Activated CD4-positive, alpha-beta T cell treated with anti-CD3 and anti-CD28 coated beads, Interleukin-2, amount 10 ng/mL, durations not matched to agents 24 days and 14 days (primary cell): ENCODE measurements at regions of chr10 and their contacts with region 1.

Region 1: DNA sequence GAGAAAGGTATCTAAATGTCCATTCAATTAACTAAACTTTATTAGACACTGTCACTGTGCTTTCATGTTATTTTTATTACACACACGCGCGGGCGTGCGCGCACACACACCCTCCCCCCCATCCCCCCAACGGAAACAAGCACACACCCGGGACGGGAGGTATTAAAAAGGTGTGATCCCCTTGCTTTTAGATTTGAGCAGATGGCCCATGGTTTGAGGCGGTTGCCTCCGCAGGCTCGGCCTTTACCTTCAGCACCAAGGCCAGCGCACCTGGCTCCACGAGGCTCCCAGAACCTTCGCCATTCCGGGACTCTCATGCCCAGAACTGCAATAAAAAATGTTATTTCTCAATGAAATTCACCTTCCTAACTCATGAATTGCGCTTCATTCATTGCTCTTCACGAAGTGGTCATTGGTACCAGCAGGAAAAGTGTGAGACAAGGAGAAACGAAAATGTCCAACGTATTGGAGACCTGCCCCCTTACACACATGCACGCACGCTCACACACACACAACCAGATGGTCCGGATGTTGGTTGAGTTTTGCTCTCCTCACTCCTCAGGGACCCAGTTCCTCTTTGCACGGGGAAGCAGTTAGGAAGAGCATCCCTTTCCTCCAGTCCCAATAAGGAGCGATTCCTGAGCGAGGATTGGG is 20.8 kb upstream of the PTF1A start:
- DNase-seq: no peak
- H3K4me3 Mint-ChIP-seq: no peak overlapping the region
- H3K27ac Mint-ChIP-seq: no peak overlapping the region
- H3K4me1 Mint-ChIP-seq: no peaks in the 10 kb centered on the region
- H3K27me3 Mint-ChIP-seq: peaks cover 64% of the 10 kb centered on the region

Region 2: DNA sequence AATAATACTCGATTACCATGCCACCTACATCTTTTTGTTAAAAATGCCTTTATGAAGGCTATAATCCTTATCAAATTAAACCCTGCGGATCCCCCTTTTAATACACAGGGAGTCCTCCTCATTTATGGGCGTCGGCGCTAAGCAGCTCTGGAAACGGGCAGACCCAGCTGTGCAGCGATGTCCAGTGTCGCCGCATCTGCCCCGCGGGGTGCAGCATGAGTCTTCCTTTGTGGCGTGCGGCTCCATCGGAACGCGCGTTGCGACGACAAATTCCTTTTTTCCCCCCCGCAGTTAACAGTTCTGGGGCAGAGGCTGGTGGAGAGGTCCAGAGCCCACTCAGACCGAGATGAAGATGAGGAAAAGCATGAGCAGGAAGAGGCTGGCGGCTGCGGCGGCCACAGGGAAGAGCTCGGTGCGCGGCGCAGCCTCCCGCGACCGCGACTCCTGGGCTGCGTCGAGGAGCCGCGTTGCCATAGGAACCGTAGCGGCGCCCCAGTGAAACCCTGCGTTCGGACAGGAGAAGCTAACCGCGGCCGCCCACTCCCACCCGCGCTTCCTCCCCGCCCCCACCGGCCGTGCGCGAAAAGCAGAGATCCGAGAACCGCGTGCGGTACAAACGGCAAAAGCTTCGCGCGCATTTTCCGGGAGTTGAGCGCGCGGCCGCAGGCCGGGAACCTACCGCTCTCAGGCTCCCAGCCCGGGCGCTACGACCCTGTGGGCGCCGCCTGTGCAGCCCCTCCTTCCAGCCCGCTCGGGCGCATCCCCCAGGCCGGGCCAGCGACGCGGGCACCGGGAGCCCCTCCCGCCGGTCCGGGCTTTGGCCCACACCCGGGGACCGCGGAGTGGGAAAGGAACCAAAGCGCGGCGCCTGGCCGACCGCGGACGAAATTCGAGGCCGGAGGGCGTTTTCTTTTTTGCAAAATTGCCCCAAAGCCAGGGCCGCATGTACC is 695.4 kb before region 1 on chr10:
- intact Hi-C with region 1: loop called (anchors 10 kb)
- DNase-seq: peak; percentile 79
- H3K4me3 Mint-ChIP-seq: peak overlapping the region; percentile 86
- H3K27ac Mint-ChIP-seq: peak overlapping the region; percentile 86
- H3K4me1 Mint-ChIP-seq: peaks cover 11% of the 10 kb centered on the region
- H3K27me3 Mint-ChIP-seq: peaks cover 57% of the 10 kb centered on the region

Region 3: DNA sequence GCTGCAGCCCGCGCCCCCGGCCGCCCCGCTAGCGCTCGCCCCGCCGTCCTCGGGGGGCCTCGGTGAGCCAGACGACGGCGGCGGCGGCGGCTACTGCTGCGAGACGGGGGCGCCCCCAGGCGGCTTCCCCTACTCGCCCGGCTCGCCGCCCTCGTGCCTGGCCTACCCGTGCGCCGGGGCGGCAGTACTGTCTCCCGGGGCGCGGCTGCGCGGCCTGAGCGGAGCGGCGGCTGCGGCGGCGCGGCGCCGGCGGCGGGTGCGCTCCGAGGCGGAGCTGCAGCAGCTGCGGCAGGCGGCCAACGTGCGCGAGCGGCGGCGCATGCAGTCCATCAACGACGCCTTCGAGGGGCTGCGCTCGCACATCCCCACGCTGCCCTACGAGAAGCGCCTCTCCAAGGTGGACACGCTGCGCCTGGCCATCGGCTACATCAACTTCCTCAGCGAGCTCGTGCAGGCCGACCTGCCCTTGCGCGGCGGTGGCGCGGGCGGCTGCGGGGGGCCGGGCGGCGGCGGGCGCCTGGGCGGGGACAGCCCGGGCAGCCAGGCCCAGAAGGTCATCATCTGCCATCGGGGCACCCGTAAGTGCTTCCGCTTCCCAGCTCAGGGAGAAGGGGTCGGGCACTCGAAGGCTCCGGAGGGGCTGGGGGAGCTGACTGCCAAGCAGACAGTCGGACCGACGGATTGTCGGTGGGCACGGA is 21.5 kb after region 1 on chr10:
- intact Hi-C with region 1: loop called (anchors 2 kb)
- DNase-seq: peak; percentile 50
- H3K4me3 Mint-ChIP-seq: no peak overlapping the region
- H3K27ac Mint-ChIP-seq: no peak overlapping the region
- H3K4me1 Mint-ChIP-seq: peaks cover 2% of the 10 kb centered on the region
- H3K27me3 Mint-ChIP-seq: peaks cover 71% of the 10 kb centered on the region

Region 4: GRCh38 chr10:23198940-23199767 is 27.8 kb after region 1 on chr10:
- intact Hi-C with region 1: loop called (anchors 2 kb)
- DNase-seq: no peak
- H3K4me3 Mint-ChIP-seq: no peak overlapping the region
- H3K27ac Mint-ChIP-seq: no peak overlapping the region
- H3K4me1 Mint-ChIP-seq: no peaks in the 10 kb centered on the region
- H3K27me3 Mint-ChIP-seq: peaks cover 81% of the 10 kb centered on the region

Region 5: DNA sequence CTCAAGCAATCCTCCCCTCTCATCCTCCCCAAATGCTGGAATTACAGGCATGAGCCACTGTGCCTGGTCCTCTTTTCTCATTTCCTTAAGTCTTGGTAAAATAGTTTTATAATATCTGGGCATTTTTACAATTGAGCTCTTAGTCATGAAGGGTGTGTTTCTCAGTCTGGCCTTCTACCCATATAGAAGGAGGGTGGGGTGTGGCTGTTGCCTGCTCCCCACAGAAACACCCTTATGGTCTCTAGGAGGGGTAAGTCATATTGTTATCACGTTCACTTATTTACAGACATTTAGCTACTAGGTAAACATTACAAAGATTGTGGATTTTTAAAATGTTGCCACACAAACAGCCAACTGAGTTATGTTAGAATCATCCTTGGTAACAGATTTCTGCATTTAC is 260.8 kb after region 1 on chr10:
- intact Hi-C with region 1: no loop called
- DNase-seq: no peak
- H3K4me3 Mint-ChIP-seq: no peak overlapping the region
- H3K27ac Mint-ChIP-seq: no peak overlapping the region
- H3K4me1 Mint-ChIP-seq: peaks cover 4% of the 10 kb centered on the region
- H3K27me3 Mint-ChIP-seq: no peaks in the 10 kb centered on the region